SK-N-SH (cell line): ENCODE measurements at regions of chr4 and their contacts with region 1.

Region 1: GRCh38 chr4:74675673-74676279 is 118.5 kb downstream of the BTC start:
- DNase-seq: peak; percentile 10
- H3K4me3 ChIP-seq: peak overlapping the region in 1 of 2 experiments; percentile 18; a peak in 1 of 4 replicates
- H3K27ac ChIP-seq: no peak overlapping the region
- H3K4me1 ChIP-seq: no peaks in the 10 kb centered on the region
- H3K27me3 ChIP-seq: peaks cover 23% of the 10 kb centered on the region; the same call in 1 of the 2 replicates
- CTCF ChIP-seq: peak; percentile 89
- EP300 ChIP-seq: no peak
- RAD21 ChIP-seq: peak; percentile 72

Region 2: DNA sequence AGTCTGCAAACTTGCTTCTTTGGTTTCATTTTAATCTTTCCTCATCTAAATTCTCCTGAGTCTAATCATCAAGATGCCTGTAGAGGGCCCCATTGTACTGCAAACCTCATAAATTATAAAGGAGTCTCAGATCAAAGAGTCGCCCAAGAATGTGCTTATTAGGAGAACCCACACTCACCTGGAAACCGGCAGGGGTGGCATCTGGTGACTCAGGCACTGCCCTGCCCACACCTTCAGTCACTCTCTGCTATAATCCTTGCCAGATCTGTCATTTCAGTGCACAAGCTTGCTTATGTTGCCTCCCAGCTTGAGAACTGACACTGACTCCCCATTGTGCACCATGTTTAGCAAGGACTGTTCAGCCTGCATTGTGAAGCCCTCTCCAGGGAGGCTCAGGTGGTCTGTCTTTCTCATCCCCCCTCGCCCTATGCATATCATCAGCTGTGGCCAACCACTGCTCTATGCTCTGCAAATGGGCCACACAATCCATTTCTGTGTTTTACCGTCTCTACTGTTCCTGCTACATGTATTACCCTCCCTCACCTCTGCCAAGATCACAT is 355.1 kb before region 1 on chr4:
- CTCF ChIA-PET with region 1: interaction called, 21 read pairs
- POLR2A ChIA-PET with region 1: no interaction called
- DNase-seq: peak; percentile 7
- H3K4me3 ChIP-seq: peak overlapping the region in 1 of 2 experiments; percentile 13; a peak in 1 of 4 replicates
- H3K27ac ChIP-seq: no peak overlapping the region
- H3K4me1 ChIP-seq: no peaks in the 10 kb centered on the region; a peak in 1 of 4 replicates
- H3K27me3 ChIP-seq: peaks cover 19% of the 10 kb centered on the region
- CTCF ChIP-seq: peak; percentile 72
- EP300 ChIP-seq: no peak
- RAD21 ChIP-seq: peak; percentile 62

Region 3: GRCh38 chr4:74376888-74377483 is 298.8 kb before region 1 on chr4:
- CTCF ChIA-PET with region 1: interaction called, 13 read pairs
- POLR2A ChIA-PET with region 1: no interaction called
- DNase-seq: peak; percentile 31
- H3K4me3 ChIP-seq: no peak overlapping the region
- H3K27ac ChIP-seq: no peak overlapping the region
- H3K4me1 ChIP-seq: no peaks in the 10 kb centered on the region
- H3K27me3 ChIP-seq: peaks cover 25% of the 10 kb centered on the region; the same call in 1 of the 2 replicates
- CTCF ChIP-seq: peak; percentile 74
- EP300 ChIP-seq: no peak
- RAD21 ChIP-seq: peak; percentile 57